Naive thymus-derived CD4-positive, alpha-beta T cell (primary cell): ENCODE measurements at regions of chr2 and their contacts with region 1.

Region 1: DNA sequence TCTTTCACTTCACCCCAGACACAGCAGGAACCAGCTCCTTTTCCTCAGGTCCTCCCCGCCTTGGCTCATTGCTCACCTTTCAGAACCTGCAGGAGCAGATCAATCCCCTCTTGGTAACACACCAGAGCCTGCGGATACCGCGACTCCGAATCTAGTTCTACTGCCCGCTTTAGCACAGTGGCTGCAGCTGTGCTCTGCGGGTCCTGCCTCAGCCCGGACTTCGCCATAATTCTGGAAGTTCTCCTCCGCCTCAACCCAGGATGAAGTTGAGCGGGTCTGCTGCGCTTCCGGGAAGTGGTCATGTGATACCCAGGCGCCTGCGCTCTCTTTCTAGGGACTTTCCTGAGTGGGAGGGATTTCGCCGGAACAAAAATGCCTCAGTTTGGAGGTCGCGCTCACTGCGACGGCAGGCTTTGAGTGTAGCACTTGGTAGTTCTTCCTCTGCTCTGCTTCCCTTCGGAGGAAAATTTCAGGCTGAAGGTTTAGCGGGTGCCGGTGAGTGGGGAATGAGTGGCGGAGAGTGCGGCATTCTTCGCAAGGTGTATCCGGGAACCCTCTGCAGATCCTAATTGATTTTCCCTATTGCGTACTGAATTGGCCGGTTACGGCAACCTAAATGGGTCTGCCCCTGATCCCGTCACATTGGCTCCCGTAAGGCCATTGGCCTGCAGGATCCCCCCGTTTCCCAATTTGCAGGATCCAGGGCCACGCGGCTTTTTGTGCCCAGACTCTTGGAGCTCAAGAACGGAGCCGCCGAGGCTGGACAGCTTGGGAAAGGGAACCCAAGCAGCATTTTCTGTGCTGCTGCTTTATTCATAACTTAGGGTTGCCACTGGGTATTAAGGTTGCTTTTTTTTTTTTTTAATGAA is at the starts of genes MITD1 and MRPL30:
- DNase-seq: peak; percentile 72 to 94 (median 90)
- ATAC-seq: peak; percentile 97
- H3K4me3 ChIP-seq: peak within 1 kb of the TSS; percentile 97
- H3K4me3 Mint-ChIP-seq: peak within 1 kb of the TSS; percentile 94 to 100 (median 99)
- H3K27ac ChIP-seq: peak within 1 kb of the TSS; percentile 89
- H3K27ac Mint-ChIP-seq: peak within 1 kb of the TSS; percentile 93 to 99 (median 99)
- H3K4me1 ChIP-seq: peaks cover 30 to 32% of the 10 kb centered on the region in 2 donors
- H3K4me1 Mint-ChIP-seq: peaks cover 41 to 85% (median 74%) of the 10 kb centered on the region in 7 donors
- H3K27me3 ChIP-seq: no peaks in the 10 kb centered on the region
- H3K27me3 Mint-ChIP-seq: no peaks in the 10 kb centered on the region
- total RNA-seq, gene MITD1: 26.8 to 80.5 (median 73.8) TPM
- total RNA-seq, gene MRPL30: 16.1 to 26.0 (median 21.9) TPM

Region 2: DNA sequence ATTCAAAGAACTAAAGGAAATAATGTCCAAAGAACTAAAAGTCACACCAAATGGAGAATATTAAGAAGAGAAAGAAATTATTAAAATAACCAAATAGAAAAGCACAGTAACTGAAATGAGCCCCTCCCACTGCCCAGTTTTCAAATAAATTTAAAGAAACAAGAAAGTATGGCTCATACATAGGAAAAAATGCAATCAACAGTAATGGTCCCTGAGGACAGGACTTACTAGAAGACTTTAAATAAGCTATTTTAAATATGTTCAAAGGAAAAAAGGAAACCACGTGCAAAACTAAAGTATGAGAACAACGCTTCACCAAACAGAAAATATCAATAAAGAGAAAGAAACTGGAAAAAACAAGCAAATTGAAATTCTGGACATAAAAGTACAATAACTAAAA is 1244.1 kb before region 1 on chr2:
- CTCF ChIA-PET with region 1: no interaction called
- POLR2A ChIA-PET with region 1: no interaction called
- intact Hi-C with region 1: no loop called
- DNase-seq: no peak
- ATAC-seq: no peak
- H3K4me3 ChIP-seq: no peak overlapping the region
- H3K4me3 Mint-ChIP-seq: peak overlapping the region in 7 of 10 donors; percentile 7 to 50 (median 45)
- H3K27ac ChIP-seq: no peak overlapping the region
- H3K27ac Mint-ChIP-seq: peak overlapping the region in 4 of 9 donors; percentile 2 to 41 (median 17)
- H3K4me1 ChIP-seq: peaks cover 0 to 8% of the 10 kb centered on the region in 2 donors
- H3K4me1 Mint-ChIP-seq: peaks cover 35 to 82% (median 78%) of the 10 kb centered on the region in 7 donors
- H3K27me3 ChIP-seq: no peaks in the 10 kb centered on the region
- H3K27me3 Mint-ChIP-seq: no peaks in the 10 kb centered on the region

Region 3: GRCh38 chr2:98608116-98608999 is 572.6 kb before region 1 on chr2 and contains the starts of genes COA5 and UNC50:
- CTCF ChIA-PET with region 1: no interaction called
- POLR2A ChIA-PET with region 1: no interaction called
- intact Hi-C with region 1: loop called (anchors 1 to 2 kb)
- DNase-seq: peak; percentile 82 to 94 (median 87)
- ATAC-seq: peak; percentile 93
- H3K4me3 ChIP-seq: peak within 1 kb of the TSS; percentile 94
- H3K4me3 Mint-ChIP-seq: peak within 1 kb of the TSS; percentile 82 to 97 (median 90)
- H3K27ac ChIP-seq: peak within 1 kb of the TSS; percentile 97
- H3K27ac Mint-ChIP-seq: peak within 1 kb of the TSS; percentile 81 to 97 (median 92)
- H3K4me1 ChIP-seq: peaks cover 39 to 48% of the 10 kb centered on the region in 2 donors
- H3K4me1 Mint-ChIP-seq: peaks cover 51 to 82% (median 70%) of the 10 kb centered on the region in 7 donors
- H3K27me3 ChIP-seq: no peaks in the 10 kb centered on the region
- H3K27me3 Mint-ChIP-seq: no peaks in the 10 kb centered on the region
- total RNA-seq, gene COA5: 23.8 to 55.2 (median 29.2) TPM
- total RNA-seq, gene UNC50: 22.2 to 41.3 (median 29.9) TPM

Region 4: GRCh38 chr2:98757904-98758421 is 423.0 kb before region 1 on chr2:
- CTCF ChIA-PET with region 1: no interaction called
- POLR2A ChIA-PET with region 1: no interaction called
- intact Hi-C with region 1: no loop called
- DNase-seq: peak in 8 of 9 donors; percentile 46 to 79 (median 74)
- ATAC-seq: peak; percentile 89
- H3K4me3 ChIP-seq: peak overlapping the region; percentile 46
- H3K4me3 Mint-ChIP-seq: peak overlapping the region; percentile 79 to 98 (median 85)
- H3K27ac ChIP-seq: peak overlapping the region; percentile 70
- H3K27ac Mint-ChIP-seq: peak overlapping the region; percentile 91 to 100 (median 97)
- H3K4me1 ChIP-seq: peaks cover 45 to 70% of the 10 kb centered on the region in 2 donors
- H3K4me1 Mint-ChIP-seq: peaks cover 56 to 97% (median 80%) of the 10 kb centered on the region in 7 donors
- H3K27me3 ChIP-seq: no peaks in the 10 kb centered on the region
- H3K27me3 Mint-ChIP-seq: no peaks in the 10 kb centered on the region

Region 5: DNA sequence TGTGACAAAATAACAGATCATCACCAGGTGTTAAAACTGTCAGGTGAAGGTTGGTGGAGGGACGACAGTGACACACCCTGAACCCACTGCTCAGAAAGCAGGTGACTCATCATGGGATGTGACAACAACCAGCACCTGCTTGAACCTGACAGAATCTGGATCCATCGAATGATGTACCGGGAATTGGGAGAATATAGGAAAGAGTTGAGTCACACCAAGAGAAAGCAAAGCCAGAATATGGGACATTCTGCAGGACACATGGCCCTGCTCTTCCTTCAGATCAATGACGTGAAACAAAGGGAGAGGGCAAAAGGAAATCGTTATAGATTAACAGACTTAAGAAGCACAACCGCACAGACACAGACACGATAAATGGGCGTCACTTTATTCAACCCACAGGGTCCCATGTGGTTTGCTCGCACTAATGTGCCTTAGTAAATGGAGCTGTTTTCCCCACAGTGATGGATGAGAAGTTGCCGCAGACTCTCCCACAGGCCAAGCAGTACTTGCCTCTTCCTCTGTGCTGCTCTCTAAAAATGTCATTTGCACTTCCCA is 345.1 kb before region 1 on chr2:
- CTCF ChIA-PET with region 1: no interaction called
- POLR2A ChIA-PET with region 1: no interaction called
- intact Hi-C with region 1: loop called in 1 of 2 experiments (anchors 5 kb)
- DNase-seq: peak in 7 of 9 donors; percentile 55 to 78 (median 72)
- ATAC-seq: peak; percentile 87
- H3K4me3 ChIP-seq: peak overlapping the region; percentile 1
- H3K4me3 Mint-ChIP-seq: peak overlapping the region; percentile 32 to 79 (median 52)
- H3K27ac ChIP-seq: peak overlapping the region; percentile 66
- H3K27ac Mint-ChIP-seq: peak overlapping the region; percentile 78 to 98 (median 88)
- H3K4me1 ChIP-seq: peaks cover 16 to 43% of the 10 kb centered on the region in 2 donors
- H3K4me1 Mint-ChIP-seq: peaks cover 24 to 51% (median 28%) of the 10 kb centered on the region in 7 donors
- H3K27me3 ChIP-seq: no peaks in the 10 kb centered on the region
- H3K27me3 Mint-ChIP-seq: peaks cover 0 to 17% (median 0%) of the 10 kb centered on the region in 5 donors

Region 6: GRCh38 chr2:99141110-99142108 is 39.6 kb before region 1 on chr2 and contains the start of gene C2orf15:
- CTCF ChIA-PET with region 1: no interaction called
- POLR2A ChIA-PET with region 1: interaction called, 22 read pairs
- intact Hi-C with region 1: loop called (anchors 1 kb)
- DNase-seq: peak; percentile 89 to 98 (median 96)
- ATAC-seq: peak; percentile 95
- H3K4me3 ChIP-seq: peak within 1 kb of the TSS; percentile 97
- H3K4me3 Mint-ChIP-seq: peak within 1 kb of the TSS; percentile 90 to 99 (median 97)
- H3K27ac ChIP-seq: peak within 1 kb of the TSS; percentile 82
- H3K27ac Mint-ChIP-seq: peak within 1 kb of the TSS; percentile 92 to 99 (median 98)
- H3K4me1 ChIP-seq: peaks cover 13% of the 10 kb centered on the region in 2 donors
- H3K4me1 Mint-ChIP-seq: peaks cover 0 to 31% (median 25%) of the 10 kb centered on the region in 7 donors
- H3K27me3 ChIP-seq: no peaks in the 10 kb centered on the region
- H3K27me3 Mint-ChIP-seq: peaks cover 0 to 41% (median 0%) of the 10 kb centered on the region in 5 donors
- total RNA-seq, gene C2orf15: 0.48 to 3.8 (median 3.1) TPM

Region 7: GRCh38 chr2:100562732-100563720 is 1382.0 kb after region 1 on chr2 and contains the start of gene PDCL3:
- CTCF ChIA-PET with region 1: no interaction called
- POLR2A ChIA-PET with region 1: no interaction called
- intact Hi-C with region 1: loop called in 1 of 2 experiments (anchors 2 kb)
- DNase-seq: peak; percentile 91 to 97 (median 96)
- ATAC-seq: peak; percentile 94
- H3K4me3 ChIP-seq: peak within 1 kb of the TSS; percentile 99
- H3K4me3 Mint-ChIP-seq: peak within 1 kb of the TSS; percentile 85 to 100 (median 97)
- H3K27ac ChIP-seq: peak within 1 kb of the TSS; percentile 78
- H3K27ac Mint-ChIP-seq: peak within 1 kb of the TSS; percentile 97 to 99 (median 99)
- H3K4me1 ChIP-seq: peaks cover 15 to 16% of the 10 kb centered on the region in 2 donors
- H3K4me1 Mint-ChIP-seq: peaks cover 14 to 64% (median 52%) of the 10 kb centered on the region in 7 donors
- H3K27me3 ChIP-seq: no peaks in the 10 kb centered on the region
- H3K27me3 Mint-ChIP-seq: peaks cover 0 to 2% (median 0%) of the 10 kb centered on the region in 5 donors
- total RNA-seq, gene PDCL3: 16.6 to 31.9 (median 19.9) TPM